ENCODE measurements at regions of chr11 and their contacts with region 1.

Region 1: DNA sequence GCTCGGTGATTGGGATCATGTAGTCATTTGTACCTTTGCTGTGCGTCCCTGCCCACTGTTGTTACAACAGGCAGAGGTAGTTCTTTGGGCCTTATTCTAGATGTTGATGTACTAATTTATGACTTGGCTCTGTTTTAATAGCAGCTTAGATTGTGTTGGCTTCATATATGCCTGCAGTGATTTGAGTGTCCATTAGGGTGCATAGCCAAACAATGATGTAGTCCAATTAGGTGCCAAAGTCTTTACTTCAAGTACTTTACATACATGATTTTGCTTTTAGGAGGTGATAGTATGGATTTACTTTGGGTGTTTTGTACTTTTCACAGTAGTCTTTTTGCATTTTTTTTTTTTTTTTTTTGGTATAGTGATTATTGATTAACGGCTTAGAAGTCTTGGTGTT is 46.4 kb downstream of the PPP6R3 start:
- DNase-seq: no peak
- H3K4me3 ChIP-seq: no peak overlapping the region
- H3K27ac ChIP-seq: no peak overlapping the region
- H3K4me1 ChIP-seq: no peaks in the 10 kb centered on the region
- H3K27me3 ChIP-seq: no peaks in the 10 kb centered on the region
- CTCF ChIP-seq: peak; percentile 3 to 7

Region 2: DNA sequence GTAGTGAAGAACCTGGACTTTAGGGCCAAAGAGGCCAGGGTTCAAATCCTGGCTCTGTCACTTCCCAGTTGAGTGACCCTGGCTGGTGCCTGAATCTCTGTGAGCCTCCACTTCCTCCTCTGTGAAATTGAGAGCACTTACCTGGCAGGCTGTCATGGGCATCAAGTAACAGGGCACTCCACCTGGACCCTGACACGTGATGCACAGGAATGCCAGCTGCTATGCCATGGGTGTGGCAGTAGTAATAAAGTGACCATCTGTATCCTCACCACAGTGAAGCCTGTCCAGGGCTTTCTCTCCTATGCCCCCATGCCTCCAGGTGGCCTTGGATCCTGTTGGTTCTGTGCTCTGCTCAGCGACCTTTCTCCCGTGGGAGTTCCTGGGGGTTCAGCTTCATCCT is 76.1 kb before region 1 on chr11:
- CTCF ChIA-PET with region 1: no interaction called
- dilution Hi-C with region 1: no loop called
- in situ Hi-C with region 1: no loop called
- intact Hi-C with region 1: no loop called
- DNase-seq: no peak
- H3K4me3 ChIP-seq: no peak overlapping the region
- H3K27ac ChIP-seq: no peak overlapping the region
- H3K4me1 ChIP-seq: no peaks in the 10 kb centered on the region
- H3K27me3 ChIP-seq: no peaks in the 10 kb centered on the region
- CTCF ChIP-seq: no peak

Region 3: GRCh38 chr11:68524681-68525080 is 17.8 kb after region 1 on chr11:
- CTCF ChIA-PET with region 1: interaction called, 39 read pairs
- dilution Hi-C with region 1: no loop called
- in situ Hi-C with region 1: no loop called
- intact Hi-C with region 1: no loop called
- DNase-seq: no peak
- H3K4me3 ChIP-seq: no peak overlapping the region
- H3K27ac ChIP-seq: no peak overlapping the region
- H3K4me1 ChIP-seq: peaks cover 5% of the 10 kb centered on the region
- H3K27me3 ChIP-seq: no peaks in the 10 kb centered on the region
- CTCF ChIP-seq: no peak

Measured in mammary epithelial cell (primary cell).